Mammary epithelial cell (primary cell): ENCODE measurements at regions of chr13 and their contacts with region 1.

Region 1: DNA sequence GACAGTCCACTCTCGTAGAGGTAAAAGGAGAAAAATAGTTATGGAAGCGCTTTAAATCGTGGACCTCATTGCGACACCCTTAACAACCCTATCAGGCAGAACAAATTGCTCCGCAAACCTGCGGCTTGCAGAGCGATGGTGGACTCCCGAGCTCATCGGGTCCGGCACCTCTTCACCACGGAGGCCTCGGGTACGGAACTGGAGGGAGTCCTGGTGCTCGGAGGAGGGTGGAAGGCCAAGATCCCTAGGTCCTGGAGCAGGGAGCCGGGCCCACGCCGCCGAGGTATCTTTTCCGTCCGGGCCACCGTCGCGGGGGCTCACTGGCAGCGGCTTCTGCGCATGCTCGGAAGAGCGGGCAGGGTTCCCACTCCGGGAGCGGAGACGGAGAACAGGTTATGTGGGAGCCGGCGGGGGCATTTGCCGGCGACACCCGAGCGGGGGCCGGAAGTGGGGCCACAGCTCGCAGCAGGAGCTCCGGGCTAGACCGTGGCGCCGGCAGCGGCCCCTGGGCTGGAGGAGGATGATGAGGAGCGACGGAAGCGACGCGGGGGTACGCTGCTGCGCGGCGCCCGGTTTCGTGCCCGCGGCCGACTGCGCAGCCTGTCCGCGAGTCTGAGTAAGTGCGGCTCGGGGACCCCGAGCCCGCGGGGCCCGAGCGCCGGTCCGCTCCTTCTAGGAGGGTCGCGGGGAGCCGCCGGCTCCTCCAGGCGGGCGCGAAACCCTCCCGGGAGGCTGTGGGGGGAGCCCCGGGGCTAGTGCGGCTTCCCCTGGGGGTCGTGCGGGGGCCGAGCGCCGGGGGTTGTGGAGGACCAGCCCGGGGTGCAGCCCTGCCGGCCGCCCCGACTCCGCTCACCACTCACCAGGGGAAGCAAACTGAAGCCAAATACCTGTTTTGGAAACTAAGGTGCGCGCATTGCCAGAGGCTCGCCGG is at the start of gene ABHD13:
- DNase-seq: peak; percentile 93
- H3K4me3 ChIP-seq: peak within 1 kb of the TSS; percentile 86 to 91 (median 91)
- H3K27ac ChIP-seq: peak within 1 kb of the TSS; percentile 83
- H3K4me1 ChIP-seq: peaks cover 25% of the 10 kb centered on the region
- H3K27me3 ChIP-seq: no peaks in the 10 kb centered on the region
- CTCF ChIP-seq: peak in 1 of 2 donors; percentile 19
- total RNA-seq, gene ABHD13: 10.1 to 13.3 TPM

Region 2: GRCh38 chr13:107211073-107211472 is 1007.2 kb before region 1 on chr13:
- CTCF ChIA-PET with region 1: no interaction called
- dilution Hi-C with region 1: no loop called
- in situ Hi-C with region 1: no loop called
- intact Hi-C with region 1: loop called (anchors 2 kb)
- DNase-seq: peak; percentile 59
- H3K4me3 ChIP-seq: no peak overlapping the region
- H3K27ac ChIP-seq: no peak overlapping the region
- H3K4me1 ChIP-seq: no peaks in the 10 kb centered on the region
- H3K27me3 ChIP-seq: no peaks in the 10 kb centered on the region
- CTCF ChIP-seq: peak; percentile 93 to 95

Region 3: GRCh38 chr13:108155185-108156106 is 62.9 kb before region 1 on chr13:
- CTCF ChIA-PET with region 1: no interaction called
- dilution Hi-C with region 1: no loop called
- in situ Hi-C with region 1: no loop called
- intact Hi-C with region 1: loop called (anchors 10 kb)
- DNase-seq: peak; percentile 20
- H3K4me3 ChIP-seq: no peak overlapping the region
- H3K27ac ChIP-seq: no peak overlapping the region
- H3K4me1 ChIP-seq: no peaks in the 10 kb centered on the region
- H3K27me3 ChIP-seq: no peaks in the 10 kb centered on the region
- CTCF ChIP-seq: peak; percentile 79 to 85

Region 4: GRCh38 chr13:108166078-108166477 is 52.2 kb before region 1 on chr13:
- CTCF ChIA-PET with region 1: no interaction called
- dilution Hi-C with region 1: no loop called
- in situ Hi-C with region 1: no loop called
- intact Hi-C with region 1: no loop called
- DNase-seq: no peak
- H3K4me3 ChIP-seq: no peak overlapping the region
- H3K27ac ChIP-seq: no peak overlapping the region
- H3K4me1 ChIP-seq: no peaks in the 10 kb centered on the region
- H3K27me3 ChIP-seq: no peaks in the 10 kb centered on the region
- CTCF ChIP-seq: no peak

Region 5: GRCh38 chr13:108176685-108177274 is 41.5 kb before region 1 on chr13:
- CTCF ChIA-PET with region 1: interaction called, 5 read pairs
- dilution Hi-C with region 1: no loop called
- in situ Hi-C with region 1: no loop called
- intact Hi-C with region 1: loop called (anchors 1 kb)
- DNase-seq: peak; percentile 21
- H3K4me3 ChIP-seq: no peak overlapping the region
- H3K27ac ChIP-seq: no peak overlapping the region
- H3K4me1 ChIP-seq: no peaks in the 10 kb centered on the region
- H3K27me3 ChIP-seq: no peaks in the 10 kb centered on the region
- CTCF ChIP-seq: peak; percentile 61 to 62

Region 6: DNA sequence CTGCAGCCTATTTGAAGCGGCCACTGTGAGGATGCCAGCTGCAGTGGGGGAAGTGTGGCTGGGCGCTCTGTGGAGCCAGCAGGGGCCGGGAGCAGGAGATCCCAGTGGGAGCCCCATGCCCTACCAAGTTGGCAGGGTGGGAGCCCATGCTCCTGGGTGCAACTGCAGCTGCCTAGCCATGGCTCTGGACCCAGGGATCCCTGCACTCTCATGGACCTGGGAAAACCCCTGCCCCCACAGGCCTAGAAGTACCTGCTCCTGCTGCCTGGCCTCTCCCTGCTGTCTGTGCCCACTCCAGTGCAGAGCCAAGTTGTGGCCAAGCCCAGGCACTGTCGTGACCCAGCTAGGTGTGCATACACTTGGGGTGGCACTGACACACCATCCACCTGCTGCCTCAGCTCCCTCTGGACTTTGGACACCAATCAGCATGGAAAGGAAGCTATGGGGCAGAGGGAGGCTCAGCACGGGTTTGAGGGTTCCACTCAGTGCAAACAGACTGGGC is 23.8 kb before region 1 on chr13:
- CTCF ChIA-PET with region 1: no interaction called
- dilution Hi-C with region 1: no loop called
- in situ Hi-C with region 1: no loop called
- intact Hi-C with region 1: loop called (anchors 1 kb)
- DNase-seq: no peak
- H3K4me3 ChIP-seq: no peak overlapping the region
- H3K27ac ChIP-seq: peak overlapping the region; percentile 33
- H3K4me1 ChIP-seq: peaks cover 37% of the 10 kb centered on the region
- H3K27me3 ChIP-seq: no peaks in the 10 kb centered on the region
- CTCF ChIP-seq: no peak